Naive thymus-derived CD8-positive, alpha-beta T cell (primary cell): ENCODE measurements at regions of chr15 and their contacts with region 1.

Region 1: GRCh38 chr15:39961051-39961450 is 27.1 kb downstream of the EIF2AK4 start:
- DNase-seq: no peak
- ATAC-seq: no peak
- H3K4me3 Mint-ChIP-seq: no peak overlapping the region
- H3K27ac Mint-ChIP-seq: no peak overlapping the region
- H3K4me1 Mint-ChIP-seq: peaks cover 0 to 3% (median 0%) of the 10 kb centered on the region in 4 donors
- H3K27me3 Mint-ChIP-seq: no peaks in the 10 kb centered on the region

Region 2: GRCh38 chr15:38961931-38962330 is 999.1 kb before region 1 on chr15:
- POLR2A ChIA-PET with region 1: interaction called, 13 read pairs
- DNase-seq: no peak
- ATAC-seq: no peak
- H3K4me3 Mint-ChIP-seq: no peak overlapping the region
- H3K27ac Mint-ChIP-seq: no peak overlapping the region
- H3K4me1 Mint-ChIP-seq: no peaks in the 10 kb centered on the region
- H3K27me3 Mint-ChIP-seq: peaks cover 2 to 7% (median 3%) of the 10 kb centered on the region in 5 donors

Region 3: GRCh38 chr15:40307421-40308211 is 346.6 kb after region 1 on chr15 and contains the start of gene PLCB2:
- POLR2A ChIA-PET with region 1: no interaction called
- DNase-seq: peak; percentile 52 to 85 (median 70)
- ATAC-seq: peak; percentile 81 to 83
- H3K4me3 Mint-ChIP-seq: peak within 1 kb of the TSS; percentile 94 to 98 (median 96)
- H3K27ac Mint-ChIP-seq: peak within 1 kb of the TSS; percentile 93 to 98 (median 97)
- H3K4me1 Mint-ChIP-seq: peaks cover 30 to 58% (median 55%) of the 10 kb centered on the region in 4 donors
- H3K27me3 Mint-ChIP-seq: no peaks in the 10 kb centered on the region
- polyA plus RNA-seq, gene PLCB2: 14.5 to 23.0 (median 22.2) TPM